ENCODE measurements at regions of chr2 and their contacts with region 1.

Region 1: DNA sequence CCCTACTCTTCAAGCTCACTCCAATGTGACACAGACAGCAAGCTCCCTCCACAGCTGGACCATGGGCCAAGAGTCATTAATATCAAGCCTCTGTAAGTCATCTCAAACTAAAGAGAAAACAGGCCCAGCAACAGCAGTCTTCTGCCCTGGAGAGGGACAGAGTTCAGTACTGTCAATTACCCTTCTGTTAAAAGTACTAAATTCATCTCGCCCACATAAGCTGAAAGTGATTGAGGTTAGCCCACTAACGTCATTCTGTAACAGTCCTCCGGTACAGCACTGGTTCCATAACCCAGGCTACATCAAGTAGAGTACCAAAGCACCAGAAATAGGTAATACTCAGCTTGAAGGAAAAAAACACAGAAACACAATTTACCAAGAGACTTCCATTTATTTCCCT is 25.9 kb downstream of the THADA start:
- DNase-seq: no peak
- H3K4me3 ChIP-seq: no peak overlapping the region
- H3K27ac ChIP-seq: no peak overlapping the region
- H3K4me1 ChIP-seq: no peaks in the 10 kb centered on the region
- H3K27me3 ChIP-seq: no peaks in the 10 kb centered on the region
- CTCF ChIP-seq: no peak

Region 2: GRCh38 chr2:43346602-43347567 is 223.0 kb before region 1 on chr2:
- CTCF ChIA-PET with region 1: no interaction called
- POLR2A ChIA-PET with region 1: interaction called, 16 read pairs
- intact Hi-C with region 1: no loop called
- DNase-seq: no peak
- H3K4me3 ChIP-seq: no peak overlapping the region
- H3K27ac ChIP-seq: no peak overlapping the region
- H3K4me1 ChIP-seq: no peaks in the 10 kb centered on the region
- H3K27me3 ChIP-seq: no peaks in the 10 kb centered on the region
- CTCF ChIP-seq: no peak